Lower lobe of right lung (tissue), 2 donors: ENCODE measurements at regions of chr11 and their contacts with region 1.

Region 1: GRCh38 chr11:662689-663274 is 25.7 kb downstream of the DRD4 start:
- DNase-seq: peak; percentile 78
- ATAC-seq: peak; percentile 82 to 88
- H3K4me3 ChIP-seq: no peak overlapping the region
- H3K27ac ChIP-seq: no peak overlapping the region
- H3K4me1 ChIP-seq: no peaks in the 10 kb centered on the region
- H3K27me3 ChIP-seq: no peaks in the 10 kb centered on the region
- CTCF ChIP-seq: peak; percentile 77

Region 2: GRCh38 chr11:727859-728748 is 65.3 kb after region 1 on chr11:
- intact Hi-C with region 1: loop called (anchors 10 kb)
- DNase-seq: peak; percentile 91
- ATAC-seq: peak; percentile 92 to 94
- H3K4me3 ChIP-seq: no peak overlapping the region
- H3K27ac ChIP-seq: peak overlapping the region; percentile 53
- H3K4me1 ChIP-seq: peaks cover 29% of the 10 kb centered on the region
- H3K27me3 ChIP-seq: peaks cover 29% of the 10 kb centered on the region
- CTCF ChIP-seq: peak; percentile 97